HepG2 (cell line): ENCODE measurements at regions of chr7 and their contacts with region 1.

Region 1: GRCh38 chr7:82605247-82605872 is 161.8 kb upstream of the CACNA2D1 start:
- DNase-seq: peak; percentile 6
- ATAC-seq: no peak
- H3K4me3 ChIP-seq: no peak overlapping the region
- H3K27ac ChIP-seq: no peak overlapping the region
- H3K4me1 ChIP-seq: no peaks in the 10 kb centered on the region
- H3K27me3 ChIP-seq: no peaks in the 10 kb centered on the region
- CTCF ChIP-seq: peak; percentile 64
- EP300 ChIP-seq: no peak
- POLR2A ChIP-seq: no peak
- RAD21 ChIP-seq: no peak

Region 2: DNA sequence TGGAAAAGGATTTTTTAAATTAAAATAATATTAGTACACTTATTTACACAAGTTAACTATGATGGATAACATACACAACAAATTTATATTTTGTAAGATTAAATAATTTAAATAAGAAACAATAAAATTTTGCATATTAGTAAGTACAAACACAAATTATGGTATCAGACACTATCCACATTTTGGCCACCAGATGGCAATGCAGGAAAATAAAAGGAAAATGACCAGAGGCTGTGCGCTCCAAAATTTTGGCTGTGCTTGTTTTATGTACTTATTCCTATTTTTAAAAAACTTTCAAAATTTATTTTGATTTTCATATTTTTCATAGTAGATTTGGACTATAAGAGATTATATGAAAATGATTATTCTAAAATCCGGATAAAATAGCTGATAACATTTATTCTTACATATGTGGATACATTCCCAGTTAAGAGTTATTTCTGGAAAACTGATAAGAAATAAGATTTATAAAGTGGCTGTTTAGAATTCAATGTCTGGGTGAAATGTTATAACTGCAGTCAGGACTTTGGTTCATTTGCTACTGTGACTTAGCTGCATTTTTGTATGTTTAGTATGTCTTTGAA is 560.8 kb before region 1 on chr7:
- CTCF ChIA-PET with region 1: no interaction called
- POLR2A ChIA-PET with region 1: no interaction called
- in situ Hi-C with region 1: no loop called
- intact Hi-C with region 1: loop called (anchors 1 kb)
- DNase-seq: peak; percentile 21
- ATAC-seq: no peak
- H3K4me3 ChIP-seq: no peak overlapping the region
- H3K27ac ChIP-seq: no peak overlapping the region
- H3K4me1 ChIP-seq: no peaks in the 10 kb centered on the region
- H3K27me3 ChIP-seq: no peaks in the 10 kb centered on the region
- CTCF ChIP-seq: peak; percentile 56
- EP300 ChIP-seq: no peak
- POLR2A ChIP-seq: no peak
- RAD21 ChIP-seq: 0 out of 2 replicates have a peak, but pooled peaks have one; percentile 28

Region 3: DNA sequence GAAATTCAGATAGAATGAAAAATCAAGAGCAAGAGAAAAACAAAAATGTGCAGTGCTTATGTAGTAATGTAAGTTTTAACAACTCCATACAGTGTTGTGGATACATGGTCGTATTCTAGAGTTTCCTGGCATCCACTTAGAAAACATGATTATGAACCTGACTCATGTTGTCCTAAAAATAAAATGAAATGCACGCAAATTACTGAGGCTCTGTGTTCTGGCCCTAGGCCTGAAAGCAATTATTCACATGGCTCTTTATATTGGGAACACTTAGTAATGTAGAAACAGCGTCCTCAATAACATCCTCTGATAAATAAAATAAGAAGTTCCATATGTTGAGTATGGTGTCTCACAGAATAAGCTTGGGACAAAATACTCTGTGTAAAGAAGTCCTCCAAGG is 1243.8 kb after region 1 on chr7:
- CTCF ChIA-PET with region 1: no interaction called
- POLR2A ChIA-PET with region 1: no interaction called
- in situ Hi-C with region 1: no loop called
- intact Hi-C with region 1: no loop called
- DNase-seq: no peak
- ATAC-seq: no peak
- H3K4me3 ChIP-seq: no peak overlapping the region
- H3K27ac ChIP-seq: no peak overlapping the region
- H3K4me1 ChIP-seq: no peaks in the 10 kb centered on the region
- H3K27me3 ChIP-seq: no peaks in the 10 kb centered on the region
- CTCF ChIP-seq: no peak
- EP300 ChIP-seq: no peak
- POLR2A ChIP-seq: no peak
- RAD21 ChIP-seq: no peak